ENCODE measurements at regions of chr7 and their contacts with region 1.

Region 1: DNA sequence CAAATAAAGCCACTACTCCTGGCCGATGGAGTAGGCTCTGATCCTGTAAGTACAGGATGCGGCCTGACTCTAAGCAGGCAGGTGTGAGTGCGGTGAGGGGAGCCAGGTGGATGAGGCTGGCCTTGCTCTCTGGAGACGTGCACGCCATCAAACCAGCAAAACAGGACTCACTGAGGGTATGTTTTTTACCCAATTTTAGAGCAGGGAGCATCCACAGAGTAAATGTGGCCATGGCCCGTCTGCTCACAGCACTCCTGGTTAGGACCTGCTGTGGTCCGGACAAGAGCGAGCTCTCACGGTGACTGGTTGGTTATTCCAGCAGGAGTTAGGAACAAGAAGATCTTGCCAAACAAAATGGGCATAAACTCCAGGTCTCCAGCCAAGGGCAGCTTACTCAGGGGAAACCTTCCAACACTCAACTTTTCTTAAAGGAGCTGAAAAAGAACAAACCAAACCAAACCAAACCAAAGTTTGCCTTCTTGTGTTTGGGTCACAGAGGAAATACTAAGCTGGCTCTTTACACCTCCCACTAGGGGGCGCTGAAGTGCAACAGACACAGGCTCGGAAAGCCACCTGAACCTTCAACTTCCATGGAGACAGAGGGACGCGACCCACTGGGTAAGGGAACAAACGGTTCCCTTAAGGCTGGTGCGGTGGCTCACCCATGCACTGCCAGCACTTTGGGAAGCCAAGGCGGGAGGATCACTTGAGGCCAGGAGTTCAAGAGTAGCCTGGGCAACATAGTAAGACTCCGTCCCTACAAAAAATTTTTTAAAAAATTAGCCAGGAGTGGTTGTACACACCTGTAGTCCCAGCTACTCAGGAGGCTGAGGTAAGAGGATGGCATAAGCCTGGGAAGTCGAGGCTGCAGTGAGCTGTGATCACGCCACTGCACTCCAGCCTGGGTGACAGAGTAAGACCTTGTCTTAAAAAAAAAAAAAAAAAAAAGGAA is 122.4 kb downstream of the CLEC2L start:
- DNase-seq: peak; percentile 91
- H3K4me3 ChIP-seq: no peak overlapping the region
- H3K27ac ChIP-seq: peak overlapping the region in 2 of 8 donors; percentile 85 to 88
- H3K4me1 ChIP-seq: peaks cover 22 to 77% (median 50%) of the 10 kb centered on the region in 6 donors
- H3K27me3 ChIP-seq: no peaks in the 10 kb centered on the region
- CTCF ChIP-seq: peak; percentile 80 to 92 (median 90)
- POLR2A ChIP-seq: no peak

Region 2: GRCh38 chr7:139016931-139017511 is 628.8 kb before region 1 on chr7:
- intact Hi-C with region 1: no loop called
- DNase-seq: peak; percentile 77
- H3K4me3 ChIP-seq: no peak overlapping the region
- H3K27ac ChIP-seq: no peak overlapping the region
- H3K4me1 ChIP-seq: peaks cover 0 to 10% (median 8%) of the 10 kb centered on the region in 6 donors
- H3K27me3 ChIP-seq: peaks cover 0 to 5% (median 0%) of the 10 kb centered on the region in 7 donors
- CTCF ChIP-seq: peak; percentile 27 to 68 (median 61)
- POLR2A ChIP-seq: no peak

Region 3: DNA sequence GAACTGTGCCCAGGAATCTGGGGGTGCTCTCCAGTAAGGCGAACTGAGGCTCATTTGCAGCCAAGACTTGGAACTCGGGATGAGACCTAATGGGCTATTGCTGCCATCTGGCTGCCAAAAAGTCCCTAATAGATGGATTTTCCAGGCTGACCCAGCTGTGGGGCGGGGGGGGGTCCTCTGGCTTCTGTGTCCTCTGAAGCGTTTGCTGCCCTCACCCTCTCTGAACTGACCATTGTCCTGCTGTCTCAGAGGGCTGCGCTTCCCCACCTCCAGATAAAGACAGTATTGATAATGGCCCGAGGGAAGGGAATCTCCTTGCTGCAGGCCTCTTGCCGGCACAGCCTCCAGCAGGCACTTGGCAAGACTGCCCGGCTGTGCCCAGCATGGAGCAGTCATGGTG is 75.7 kb before region 1 on chr7:
- intact Hi-C with region 1: no loop called
- DNase-seq: peak; percentile 21
- H3K4me3 ChIP-seq: no peak overlapping the region
- H3K27ac ChIP-seq: no peak overlapping the region
- H3K4me1 ChIP-seq: no peaks in the 10 kb centered on the region
- H3K27me3 ChIP-seq: no peaks in the 10 kb centered on the region
- CTCF ChIP-seq: no peak
- POLR2A ChIP-seq: no peak

Region 4: DNA sequence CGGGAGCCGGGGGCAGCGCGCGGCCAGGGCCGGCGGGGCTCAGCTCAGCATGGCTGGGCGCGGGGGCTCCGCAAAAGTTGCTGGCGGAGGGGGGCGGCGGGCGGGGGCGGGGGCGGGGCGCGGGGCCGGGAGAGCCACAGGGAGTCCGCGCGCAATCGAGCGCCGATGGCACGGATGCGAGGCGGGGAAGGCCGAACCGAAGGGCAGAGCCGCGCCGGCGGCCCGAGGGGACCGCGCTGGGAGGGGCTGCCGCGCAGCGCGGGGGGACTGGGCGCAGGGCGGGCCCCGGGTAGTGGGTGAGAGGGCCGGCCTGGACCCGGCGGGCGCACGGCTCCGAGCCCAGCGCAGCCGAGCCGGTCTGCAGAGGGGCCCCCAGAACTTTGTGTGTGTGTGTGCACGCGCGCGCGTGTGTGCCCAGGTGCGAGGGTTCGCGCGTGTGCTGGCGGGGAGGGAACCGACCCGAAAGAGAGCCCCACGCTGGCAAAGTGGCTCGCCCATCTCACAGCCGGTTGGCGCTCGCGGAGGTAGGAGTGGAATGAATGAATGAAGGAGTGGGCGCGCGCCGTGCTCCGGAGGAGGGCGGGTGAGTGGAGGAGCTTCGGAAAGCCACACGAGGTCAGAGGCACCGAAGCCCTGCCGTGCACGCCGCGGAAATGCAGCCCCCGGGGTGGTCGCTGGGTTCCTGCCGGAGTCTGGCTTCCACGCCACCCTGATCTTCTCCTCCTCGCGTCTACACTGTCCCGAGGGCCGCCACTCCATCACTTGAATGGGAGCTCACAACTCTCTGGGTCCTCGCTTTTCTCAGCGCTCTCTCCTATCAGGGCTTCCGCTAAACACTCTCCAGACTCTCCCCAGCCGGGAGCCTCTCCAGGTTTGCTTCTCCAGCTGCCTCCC is 132.3 kb after region 1 on chr7 and contains the start of gene HIPK2:
- intact Hi-C with region 1: loop called (anchors 2 kb)
- DNase-seq: peak; percentile 95
- H3K4me3 ChIP-seq: peak within 1 kb of the TSS; percentile 73 to 94 (median 90)
- H3K27ac ChIP-seq: peak within 1 kb of the TSS; percentile 87 to 97 (median 92)
- H3K4me1 ChIP-seq: peaks cover 15 to 46% (median 39%) of the 10 kb centered on the region in 6 donors
- H3K27me3 ChIP-seq: peaks cover 0 to 16% (median 0%) of the 10 kb centered on the region in 7 donors
- CTCF ChIP-seq: peak in 1 of 11 experiments; percentile 8
- POLR2A ChIP-seq: no peak
- total RNA-seq, gene HIPK2: 48.9 to 97.5 (median 58.9) TPM